Heart left ventricle (tissue), 16 donors: ENCODE measurements at regions of chr19 and their contacts with region 1.

Region 1: DNA sequence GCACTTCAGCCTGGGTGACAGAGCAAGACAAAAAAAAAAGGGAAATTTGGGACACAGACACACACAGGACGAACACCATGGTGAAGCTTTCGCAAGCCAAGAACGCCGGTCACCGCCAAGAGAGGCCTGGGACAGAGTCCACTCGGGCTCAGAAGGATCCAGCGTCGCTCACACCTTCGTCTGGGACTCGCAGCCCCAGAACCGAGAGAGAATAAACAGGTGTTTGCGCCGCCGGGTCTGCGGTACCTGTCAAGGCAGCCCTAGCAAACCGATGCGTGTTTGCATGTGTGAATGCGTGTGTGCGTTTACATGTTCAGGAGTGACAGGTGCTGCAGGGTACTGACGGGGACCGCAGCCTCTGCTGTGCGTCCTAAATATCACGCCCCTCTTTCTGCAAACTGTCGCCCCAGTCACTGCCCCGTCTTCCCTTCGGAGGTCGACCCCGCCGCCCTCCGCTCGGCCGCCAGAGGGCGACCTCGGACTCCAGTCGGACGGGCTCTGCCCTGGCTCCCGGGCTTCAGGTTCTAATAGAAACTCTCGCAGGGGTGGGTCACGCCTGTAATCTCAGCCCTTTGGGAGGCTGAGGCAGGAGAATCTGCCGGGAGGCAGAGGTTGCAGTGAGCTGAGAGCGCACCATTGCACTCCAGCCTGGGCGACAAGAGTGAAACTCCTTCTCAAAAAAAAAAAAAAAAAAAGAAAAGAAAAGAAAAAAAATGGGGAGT is 11.8 kb upstream of the CSNK1G2 start:
- DNase-seq: peak; percentile 73 to 89 (median 78)
- ATAC-seq: peak; percentile 62 to 94 (median 90)
- H3K4me3 ChIP-seq: peak overlapping the region in 11 of 12 donors; percentile 21 to 59 (median 45)
- H3K27ac ChIP-seq: no peak overlapping the region
- H3K4me1 ChIP-seq: peaks cover 0 to 15% (median 10%) of the 10 kb centered on the region in 12 donors
- H3K27me3 ChIP-seq: no peaks in the 10 kb centered on the region
- CTCF ChIP-seq: peak; percentile 82 to 95 (median 90)
- POLR2A ChIP-seq: no peak

Region 2: GRCh38 chr19:1863726-1864480 is 65.3 kb before region 1 on chr19:
- intact Hi-C with region 1: loop called in 1 of 10 experiments (anchors 2 kb)
- DNase-seq: peak; percentile 93 to 96 (median 93)
- ATAC-seq: peak; percentile 66 to 83 (median 82)
- H3K4me3 ChIP-seq: peak overlapping the region; percentile 59 to 90 (median 72)
- H3K27ac ChIP-seq: peak overlapping the region; percentile 66 to 98 (median 90)
- H3K4me1 ChIP-seq: peaks cover 0 to 50% (median 36%) of the 10 kb centered on the region in 12 donors
- H3K27me3 ChIP-seq: no peaks in the 10 kb centered on the region
- CTCF ChIP-seq: no peak
- POLR2A ChIP-seq: peak in 1 of 2 donors; percentile 39

Region 3: GRCh38 chr19:1884719-1885334 is 44.4 kb before region 1 on chr19:
- intact Hi-C with region 1: no loop called
- DNase-seq: no peak
- ATAC-seq: peak in 2 of 4 donors; percentile 1 to 10
- H3K4me3 ChIP-seq: peak overlapping the region; percentile 71 to 99 (median 96)
- H3K27ac ChIP-seq: peak overlapping the region; percentile 86 to 97 (median 92)
- H3K4me1 ChIP-seq: peaks cover 4 to 67% (median 39%) of the 10 kb centered on the region in 12 donors
- H3K27me3 ChIP-seq: no peaks in the 10 kb centered on the region
- CTCF ChIP-seq: no peak
- POLR2A ChIP-seq: no peak

Region 4: DNA sequence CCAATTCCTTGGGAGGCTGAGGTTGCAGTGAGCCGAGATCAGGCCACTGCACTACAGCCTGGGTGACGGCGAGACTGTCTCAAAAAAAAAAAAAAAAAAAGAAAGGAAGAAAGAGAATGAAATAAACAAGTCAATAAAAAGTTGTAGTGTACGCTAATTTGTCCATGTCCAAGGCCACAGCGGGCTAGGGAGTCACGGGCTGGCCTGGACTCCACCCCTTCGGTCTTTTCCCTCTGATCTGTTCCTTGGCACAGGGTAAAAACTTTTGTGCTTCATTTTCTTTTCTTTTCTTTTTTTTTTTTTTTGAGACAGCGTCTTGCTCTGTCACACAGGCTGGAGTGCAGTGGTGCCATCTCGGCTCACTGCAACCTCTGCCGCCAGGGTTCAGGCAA is 141.2 kb after region 1 on chr19:
- intact Hi-C with region 1: loop called in 9 of 10 experiments (anchors 2 to 10 kb)
- DNase-seq: no peak
- ATAC-seq: no peak
- H3K4me3 ChIP-seq: no peak overlapping the region
- H3K27ac ChIP-seq: no peak overlapping the region
- H3K4me1 ChIP-seq: peaks cover 0 to 38% (median 8%) of the 10 kb centered on the region in 12 donors
- H3K27me3 ChIP-seq: no peaks in the 10 kb centered on the region
- CTCF ChIP-seq: no peak
- POLR2A ChIP-seq: no peak

Region 5: DNA sequence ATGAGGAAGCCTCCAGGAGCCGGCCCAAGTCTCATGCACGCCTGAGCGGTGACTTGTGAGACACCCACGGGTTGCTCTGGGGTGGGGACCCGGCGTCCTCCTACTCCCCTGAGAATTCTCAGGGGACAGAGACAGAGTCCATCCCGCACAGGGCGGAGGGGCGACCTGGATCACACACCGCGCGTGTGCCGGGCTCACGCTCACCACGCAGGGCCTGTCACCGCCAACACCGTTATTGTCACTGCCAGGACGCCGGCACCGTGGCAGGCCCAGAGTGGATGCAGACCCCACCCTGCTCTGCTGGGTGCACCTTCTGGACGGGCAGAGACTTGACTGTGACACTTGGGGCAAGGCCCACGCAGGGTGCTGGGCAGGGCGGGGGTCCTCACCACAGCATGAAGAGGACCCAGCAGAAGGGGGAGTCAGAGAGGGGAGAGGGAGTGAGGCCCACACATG is 150.7 kb after region 1 on chr19:
- intact Hi-C with region 1: loop called in 2 of 10 experiments (anchors 5 to 10 kb)
- DNase-seq: no peak
- ATAC-seq: peak in 1 of 4 donors; percentile 8
- H3K4me3 ChIP-seq: no peak overlapping the region
- H3K27ac ChIP-seq: no peak overlapping the region
- H3K4me1 ChIP-seq: peaks cover 0 to 48% (median 7%) of the 10 kb centered on the region in 12 donors
- H3K27me3 ChIP-seq: no peaks in the 10 kb centered on the region
- CTCF ChIP-seq: no peak
- POLR2A ChIP-seq: no peak